Aorta (tissue), 5 donors: ENCODE measurements at regions of chr2 and their contacts with region 1.

Region 1: DNA sequence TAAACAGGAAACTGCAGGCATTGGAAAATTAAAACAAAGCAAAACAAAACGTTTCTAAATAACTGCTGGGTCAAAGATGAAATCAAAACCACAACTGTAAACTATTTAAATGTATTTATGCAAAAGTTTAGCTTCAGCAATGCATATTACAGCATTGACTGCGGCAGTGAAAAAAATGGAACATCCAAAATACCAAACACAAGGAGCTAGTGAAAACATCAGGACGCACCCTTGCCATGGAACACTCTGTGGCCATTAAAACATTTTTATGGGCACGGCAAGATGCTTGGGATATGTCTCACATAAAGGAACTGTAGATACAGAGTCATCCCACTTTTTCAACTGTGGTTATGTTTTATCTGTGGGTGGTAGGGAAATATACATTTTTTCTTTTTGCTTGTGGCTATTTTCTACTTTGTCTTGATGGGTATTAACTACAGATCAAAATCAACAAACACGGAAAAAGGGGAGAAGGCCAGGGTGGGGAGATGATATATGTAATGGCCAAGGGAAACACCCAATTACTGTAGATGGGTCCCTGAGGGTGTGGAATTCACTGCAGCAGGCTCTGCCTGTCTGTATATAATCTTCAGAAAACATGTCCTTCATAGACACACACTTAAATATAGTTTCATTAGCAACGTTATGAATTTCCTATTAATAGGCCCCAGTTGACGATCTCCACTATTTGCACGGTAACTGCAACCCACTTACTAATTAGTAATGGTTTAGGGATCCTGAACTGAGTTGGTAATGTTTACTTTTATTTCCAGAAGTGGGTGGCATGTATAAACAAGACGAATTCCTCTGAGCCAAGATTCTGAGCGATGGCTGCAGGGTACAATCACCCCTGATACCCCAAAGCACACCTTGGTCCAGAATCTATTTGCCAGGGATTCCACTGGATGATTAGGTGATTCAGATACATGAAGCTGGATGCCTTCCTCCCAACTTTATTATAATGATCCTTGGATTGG is 110.5 kb downstream of the ACKR3 start:
- DNase-seq: no peak
- ATAC-seq: no peak
- H3K4me3 ChIP-seq: no peak overlapping the region
- H3K27ac ChIP-seq: no peak overlapping the region
- H3K4me1 ChIP-seq: peaks cover 4% of the 10 kb centered on the region in 2 donors
- H3K27me3 ChIP-seq: no peaks in the 10 kb centered on the region

Region 2: GRCh38 chr2:236782938-236783337 is 102.8 kb after region 1 on chr2:
- intact Hi-C with region 1: loop called in 1 of 2 experiments (anchors 10 kb)
- DNase-seq: no peak
- ATAC-seq: no peak
- H3K4me3 ChIP-seq: no peak overlapping the region
- H3K27ac ChIP-seq: no peak overlapping the region
- H3K4me1 ChIP-seq: no peaks in the 10 kb centered on the region
- H3K27me3 ChIP-seq: no peaks in the 10 kb centered on the region